ENCODE measurements at regions of chr19 and their contacts with region 1.

Region 1: DNA sequence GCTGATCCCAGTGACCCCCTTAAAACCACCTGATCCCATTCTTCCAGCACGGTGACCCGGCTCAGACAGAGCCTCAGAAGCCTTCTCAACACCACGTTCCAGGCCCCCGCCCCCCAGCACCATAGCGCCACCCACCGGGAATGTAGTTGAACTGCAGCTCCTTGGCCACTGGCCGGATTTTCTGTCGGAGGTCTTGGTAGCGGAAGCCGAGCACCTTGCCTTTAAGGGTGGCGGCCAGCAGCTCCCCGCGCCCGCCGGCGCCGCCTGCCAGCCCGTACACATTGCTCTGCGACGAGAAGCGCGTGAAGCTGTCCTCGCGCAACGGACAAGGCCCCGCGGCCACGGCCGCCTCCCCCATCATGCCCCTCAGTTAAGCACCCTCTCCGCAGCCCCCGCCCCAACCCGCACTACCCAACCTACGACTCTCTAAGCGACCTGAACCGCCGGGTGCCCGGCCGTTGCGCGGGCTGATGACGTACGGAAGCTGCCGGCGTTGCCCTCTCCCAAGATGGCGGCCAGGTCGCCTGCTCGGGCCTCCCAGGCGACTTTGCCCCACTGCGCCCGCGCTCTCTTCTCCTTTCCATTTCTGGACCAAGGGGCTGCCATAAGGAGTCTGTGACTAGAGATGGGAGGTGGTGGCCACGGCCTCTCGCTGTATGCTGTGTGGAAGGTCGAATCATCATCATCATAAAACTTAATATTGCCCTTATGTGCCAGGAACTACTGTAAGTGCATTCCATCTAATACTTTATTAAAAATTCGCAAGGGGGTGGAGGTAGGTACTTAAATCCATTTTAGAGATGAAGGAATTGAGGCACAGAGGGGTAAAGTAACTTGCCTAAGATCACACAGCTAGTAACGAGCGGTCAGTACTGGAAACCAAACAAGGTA is at the start of gene KPTN:
- DNase-seq: peak; percentile 95
- ATAC-seq: peak; percentile 90
- H3K4me3 Mint-ChIP-seq: peak within 1 kb of the TSS; percentile 92
- H3K27ac Mint-ChIP-seq: peak within 1 kb of the TSS; percentile 98
- H3K4me1 Mint-ChIP-seq: peaks cover 27% of the 10 kb centered on the region
- H3K27me3 Mint-ChIP-seq: no peaks in the 10 kb centered on the region
- total RNA-seq, gene KPTN: 9.7 to 10.5 TPM

Region 2: DNA sequence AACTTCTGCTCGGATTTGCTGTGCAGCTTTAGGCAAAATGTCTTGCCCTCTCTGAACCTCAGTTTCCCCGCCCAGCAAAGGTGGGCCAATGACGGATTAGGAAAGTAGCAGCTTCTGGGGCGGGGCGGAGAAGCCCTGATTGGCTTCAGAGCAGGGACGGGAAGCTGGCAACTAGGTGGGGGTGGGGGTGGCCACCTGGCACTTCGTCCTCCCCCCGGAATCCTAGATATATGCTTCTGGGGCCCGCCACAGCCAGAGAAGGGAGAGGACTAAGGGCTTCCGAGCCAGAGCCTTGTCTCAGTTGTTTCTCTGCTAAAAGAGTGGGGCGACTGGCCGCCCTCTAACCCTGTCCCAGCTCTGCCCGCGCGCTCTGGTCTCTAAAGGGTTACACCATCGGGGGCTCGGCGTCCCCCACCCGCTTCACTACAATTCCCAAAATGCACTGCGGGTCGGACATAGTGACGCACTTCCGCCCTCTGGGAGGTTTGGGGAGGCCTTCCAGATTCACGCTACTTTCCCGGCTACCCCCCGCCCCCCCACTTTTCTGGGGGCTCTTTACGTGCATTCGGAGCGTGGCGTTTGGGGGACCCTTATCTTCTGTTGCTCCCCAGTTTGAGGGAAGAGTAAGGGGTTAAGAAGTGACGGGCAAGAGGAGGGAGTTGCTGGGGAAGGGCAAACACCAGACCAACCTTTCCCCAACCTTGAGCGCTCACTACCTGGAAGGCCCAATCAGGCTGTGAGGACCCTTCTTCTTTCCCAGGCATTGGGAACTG is 1597.4 kb before region 1 on chr19:
- CTCF ChIA-PET with region 1: no interaction called
- POLR2A ChIA-PET with region 1: no interaction called
- intact Hi-C with region 1: loop called in 1 of 2 experiments (anchors 10 kb)
- DNase-seq: peak; percentile 96
- ATAC-seq: peak; percentile 85
- H3K4me3 Mint-ChIP-seq: peak overlapping the region; percentile 85
- H3K27ac Mint-ChIP-seq: peak overlapping the region; percentile 95
- H3K4me1 Mint-ChIP-seq: peaks cover 17% of the 10 kb centered on the region
- H3K27me3 Mint-ChIP-seq: no peaks in the 10 kb centered on the region

Region 3: DNA sequence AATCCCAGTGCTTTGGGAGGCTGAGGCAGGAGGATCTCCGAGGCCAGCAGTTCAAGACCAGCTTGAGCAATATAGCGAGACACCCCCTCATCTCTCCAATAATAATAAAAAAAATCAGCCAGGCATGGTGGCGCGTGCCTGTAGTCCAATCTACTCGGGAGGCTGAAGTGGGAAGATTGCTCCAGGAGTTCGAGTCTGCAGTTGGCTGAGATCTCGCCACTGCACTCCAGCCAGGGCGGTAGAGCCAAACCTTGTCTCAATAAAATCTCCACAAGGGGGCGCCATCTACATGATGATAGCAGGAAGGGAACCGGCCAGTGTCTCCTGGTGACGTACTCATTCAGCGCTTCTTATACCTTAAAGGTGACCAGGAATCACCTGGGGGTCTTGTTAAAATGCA is 188.0 kb before region 1 on chr19:
- CTCF ChIA-PET with region 1: no interaction called
- POLR2A ChIA-PET with region 1: no interaction called
- intact Hi-C with region 1: loop called in 1 of 2 experiments (anchors 5 kb)
- DNase-seq: peak; percentile 87
- ATAC-seq: peak; percentile 98
- H3K4me3 Mint-ChIP-seq: no peak overlapping the region
- H3K27ac Mint-ChIP-seq: no peak overlapping the region
- H3K4me1 Mint-ChIP-seq: peaks cover 2% of the 10 kb centered on the region
- H3K27me3 Mint-ChIP-seq: no peaks in the 10 kb centered on the region

Region 4: GRCh38 chr19:47436712-47437401 is 47.2 kb before region 1 on chr19:
- CTCF ChIA-PET with region 1: interaction called, 13 read pairs
- POLR2A ChIA-PET with region 1: no interaction called
- intact Hi-C with region 1: loop called in 1 of 2 experiments (anchors 1 kb)
- DNase-seq: peak; percentile 92
- ATAC-seq: peak; percentile 91
- H3K4me3 Mint-ChIP-seq: no peak overlapping the region
- H3K27ac Mint-ChIP-seq: no peak overlapping the region
- H3K4me1 Mint-ChIP-seq: peaks cover 17% of the 10 kb centered on the region
- H3K27me3 Mint-ChIP-seq: peaks cover 38% of the 10 kb centered on the region

Region 5: GRCh38 chr19:47494729-47495128 is 10.7 kb after region 1 on chr19:
- CTCF ChIA-PET with region 1: interaction called, 11 read pairs
- POLR2A ChIA-PET with region 1: interaction called, 3 read pairs
- intact Hi-C with region 1: no loop called
- DNase-seq: no peak
- ATAC-seq: no peak
- H3K4me3 Mint-ChIP-seq: no peak overlapping the region
- H3K27ac Mint-ChIP-seq: no peak overlapping the region
- H3K4me1 Mint-ChIP-seq: no peaks in the 10 kb centered on the region
- H3K27me3 Mint-ChIP-seq: no peaks in the 10 kb centered on the region

Region 6: GRCh38 chr19:47523473-47523872 is 39.4 kb after region 1 on chr19:
- CTCF ChIA-PET with region 1: no interaction called
- POLR2A ChIA-PET with region 1: no interaction called
- intact Hi-C with region 1: no loop called
- DNase-seq: no peak
- ATAC-seq: no peak
- H3K4me3 Mint-ChIP-seq: no peak overlapping the region
- H3K27ac Mint-ChIP-seq: no peak overlapping the region
- H3K4me1 Mint-ChIP-seq: peaks cover 10% of the 10 kb centered on the region
- H3K27me3 Mint-ChIP-seq: no peaks in the 10 kb centered on the region

Region 7: DNA sequence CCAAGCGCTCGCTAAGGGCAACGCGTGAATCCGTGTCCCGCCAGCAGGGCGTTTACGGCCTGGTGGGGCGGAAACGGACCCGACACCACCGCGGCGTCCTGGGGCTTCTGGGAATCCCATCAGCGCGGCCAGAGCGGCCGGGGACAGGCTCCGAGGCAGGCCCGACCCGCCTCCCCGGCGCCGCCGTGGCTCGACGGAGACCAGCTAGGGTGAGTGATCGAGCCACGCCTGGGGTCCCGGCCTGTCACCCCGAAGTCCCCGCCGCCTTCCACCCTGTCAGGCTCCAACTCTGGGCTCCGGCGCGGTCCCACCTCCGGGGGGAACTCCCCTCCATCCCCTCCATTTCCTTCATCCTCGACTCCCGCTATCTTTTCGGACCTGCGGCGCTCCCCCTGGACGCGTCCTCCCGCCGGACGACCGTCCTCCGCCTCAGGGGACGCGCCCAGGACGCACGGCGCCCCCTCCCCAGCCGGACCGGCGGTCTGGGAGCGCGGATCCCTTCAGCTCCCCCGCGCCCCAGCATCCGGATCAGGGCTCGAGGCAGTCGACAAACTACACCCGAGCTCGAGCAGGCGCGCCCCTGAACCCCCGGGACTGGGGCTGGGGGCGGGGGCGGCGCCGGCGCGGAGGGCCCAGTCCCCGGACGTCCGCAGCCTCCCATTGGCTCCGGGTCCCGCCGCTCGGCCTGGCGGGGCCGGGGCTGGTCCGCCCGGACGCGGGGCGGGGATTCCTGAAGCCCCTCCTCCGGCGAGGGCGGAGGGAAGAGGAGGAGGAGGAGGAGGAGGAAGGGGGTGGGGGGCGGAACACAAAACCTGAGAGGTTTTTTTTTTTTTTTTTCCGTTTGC is 124.3 kb after region 1 on chr19:
- CTCF ChIA-PET with region 1: no interaction called
- POLR2A ChIA-PET with region 1: no interaction called
- intact Hi-C with region 1: loop called in 1 of 2 experiments (anchors 1 kb)
- DNase-seq: peak; percentile 97
- ATAC-seq: peak; percentile 93
- H3K4me3 Mint-ChIP-seq: peak overlapping the region; percentile 79
- H3K27ac Mint-ChIP-seq: peak overlapping the region; percentile 72
- H3K4me1 Mint-ChIP-seq: peaks cover 27% of the 10 kb centered on the region
- H3K27me3 Mint-ChIP-seq: no peaks in the 10 kb centered on the region

Measured in activated CD4-positive, alpha-beta T cell treated with anti-CD3 and anti-CD28 coated beads for 36 hours (primary cell).